GM12878 (cell line): ENCODE measurements at regions of chr11 and their contacts with region 1.

Region 1: GRCh38 chr11:16749666-16750065 is 11.2 kb downstream of the C11orf58 start:
- DNase-seq: no peak
- ATAC-seq: peak; percentile 74
- H3K4me3 ChIP-seq: no peak overlapping the region
- H3K27ac ChIP-seq: no peak overlapping the region
- H3K4me1 ChIP-seq: no peaks in the 10 kb centered on the region
- H3K27me3 ChIP-seq: no peaks in the 10 kb centered on the region
- CTCF ChIP-seq: no peak
- EP300 ChIP-seq: no peak
- POLR2A ChIP-seq: no peak
- RAD21 ChIP-seq: no peak

Region 2: GRCh38 chr11:16776711-16777612 is 27.3 kb after region 1 on chr11:
- CTCF ChIA-PET with region 1: no interaction called
- POLR2A ChIA-PET with region 1: no interaction called
- RAD21 ChIA-PET with region 1: no interaction called
- SMC1A ChIA-PET with region 1: no interaction called
- in situ Hi-C with region 1: no loop called
- intact Hi-C with region 1: no loop called
- DNase-seq: no peak
- ATAC-seq: no peak
- H3K4me3 ChIP-seq: no peak overlapping the region
- H3K27ac ChIP-seq: no peak overlapping the region
- H3K4me1 ChIP-seq: no peaks in the 10 kb centered on the region
- H3K27me3 ChIP-seq: no peaks in the 10 kb centered on the region
- CTCF ChIP-seq: no peak
- EP300 ChIP-seq: no peak
- POLR2A ChIP-seq: no peak
- RAD21 ChIP-seq: no peak

Region 3: DNA sequence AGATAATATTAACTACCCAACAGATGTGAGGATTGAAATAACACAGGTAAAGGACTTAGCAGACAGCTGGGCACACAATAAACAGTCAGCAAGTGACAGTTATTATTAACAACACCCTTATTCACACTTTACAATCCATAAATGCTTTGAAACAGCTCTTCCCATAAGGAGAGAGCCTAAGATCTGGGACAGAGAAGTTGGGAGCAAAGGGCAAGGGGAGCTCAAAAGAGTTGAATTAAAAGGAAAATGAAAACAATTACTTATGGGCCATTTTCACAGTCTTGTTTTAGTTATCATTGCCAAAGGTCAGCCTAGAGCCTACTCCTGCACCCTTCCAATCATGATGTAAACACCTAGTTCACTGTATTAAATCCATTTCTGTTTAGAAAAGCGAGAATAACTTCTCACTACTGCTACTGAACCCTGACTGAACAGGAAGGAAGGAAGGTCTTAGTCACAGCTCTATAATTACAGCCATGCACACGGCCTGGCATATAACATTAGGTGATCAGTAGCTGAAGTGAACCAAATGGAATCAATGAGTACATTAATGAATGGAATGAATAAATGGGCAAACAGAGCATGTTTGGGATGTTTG is 153.2 kb after region 1 on chr11:
- CTCF ChIA-PET with region 1: no interaction called
- POLR2A ChIA-PET with region 1: no interaction called
- RAD21 ChIA-PET with region 1: no interaction called
- SMC1A ChIA-PET with region 1: no interaction called
- in situ Hi-C with region 1: no loop called
- intact Hi-C with region 1: no loop called
- DNase-seq: peak; percentile 65
- ATAC-seq: peak; percentile 86
- H3K4me3 ChIP-seq: no peak overlapping the region; the same call in 1 of the 2 replicates
- H3K27ac ChIP-seq: peak overlapping the region; percentile 92
- H3K4me1 ChIP-seq: peaks cover 31% of the 10 kb centered on the region
- H3K27me3 ChIP-seq: no peaks in the 10 kb centered on the region
- CTCF ChIP-seq: no peak
- EP300 ChIP-seq: no peak
- POLR2A ChIP-seq: no peak
- RAD21 ChIP-seq: no peak

Region 4: GRCh38 chr11:17129003-17129402 is 379.3 kb after region 1 on chr11:
- CTCF ChIA-PET with region 1: no interaction called
- POLR2A ChIA-PET with region 1: interaction called, 10 read pairs
- RAD21 ChIA-PET with region 1: no interaction called
- SMC1A ChIA-PET with region 1: no interaction called
- in situ Hi-C with region 1: no loop called
- intact Hi-C with region 1: no loop called
- DNase-seq: no peak
- ATAC-seq: no peak
- H3K4me3 ChIP-seq: no peak overlapping the region
- H3K27ac ChIP-seq: no peak overlapping the region
- H3K4me1 ChIP-seq: no peaks in the 10 kb centered on the region
- H3K27me3 ChIP-seq: no peaks in the 10 kb centered on the region
- CTCF ChIP-seq: no peak
- EP300 ChIP-seq: no peak
- POLR2A ChIP-seq: no peak
- RAD21 ChIP-seq: no peak